ENCODE measurements at regions of chr16 and their contacts with region 1.

Region 1: DNA sequence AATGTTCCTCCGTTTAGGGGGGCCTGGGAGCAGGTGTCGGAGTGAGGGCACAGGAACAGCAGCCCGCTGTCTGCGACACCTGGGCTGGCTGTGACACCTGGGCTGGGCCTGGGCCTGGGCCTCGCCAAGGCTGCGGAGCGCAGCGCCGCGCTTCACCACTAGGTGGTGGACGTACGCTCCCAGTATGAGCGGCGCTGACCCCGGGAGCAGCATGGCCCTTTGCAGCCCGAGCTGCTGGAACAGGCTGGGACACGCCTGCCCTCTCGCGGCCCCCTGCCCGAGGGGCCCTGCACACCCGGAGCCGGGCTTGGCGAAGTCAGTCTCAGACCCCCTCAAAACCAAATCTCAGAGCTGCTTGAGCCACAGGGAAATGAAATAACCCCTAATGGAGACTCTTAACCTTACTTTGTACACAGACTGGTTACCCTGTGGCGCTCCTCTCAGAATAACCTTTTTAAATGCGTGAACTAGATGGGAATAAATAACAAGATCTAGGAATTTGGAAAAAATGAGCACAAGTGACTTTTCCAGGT is 38.6 kb upstream of the FA2H start:
- DNase-seq: no peak
- H3K4me3 ChIP-seq: no peak overlapping the region
- CTCF ChIP-seq: peak; percentile 97

Region 2: GRCh38 chr16:74709441-74709877 is 103.7 kb before region 1 on chr16:
- CTCF ChIA-PET with region 1: interaction called, 19 read pairs
- POLR2A ChIA-PET with region 1: no interaction called
- DNase-seq: no peak
- H3K4me3 ChIP-seq: no peak overlapping the region
- CTCF ChIP-seq: peak; percentile 93

Region 3: DNA sequence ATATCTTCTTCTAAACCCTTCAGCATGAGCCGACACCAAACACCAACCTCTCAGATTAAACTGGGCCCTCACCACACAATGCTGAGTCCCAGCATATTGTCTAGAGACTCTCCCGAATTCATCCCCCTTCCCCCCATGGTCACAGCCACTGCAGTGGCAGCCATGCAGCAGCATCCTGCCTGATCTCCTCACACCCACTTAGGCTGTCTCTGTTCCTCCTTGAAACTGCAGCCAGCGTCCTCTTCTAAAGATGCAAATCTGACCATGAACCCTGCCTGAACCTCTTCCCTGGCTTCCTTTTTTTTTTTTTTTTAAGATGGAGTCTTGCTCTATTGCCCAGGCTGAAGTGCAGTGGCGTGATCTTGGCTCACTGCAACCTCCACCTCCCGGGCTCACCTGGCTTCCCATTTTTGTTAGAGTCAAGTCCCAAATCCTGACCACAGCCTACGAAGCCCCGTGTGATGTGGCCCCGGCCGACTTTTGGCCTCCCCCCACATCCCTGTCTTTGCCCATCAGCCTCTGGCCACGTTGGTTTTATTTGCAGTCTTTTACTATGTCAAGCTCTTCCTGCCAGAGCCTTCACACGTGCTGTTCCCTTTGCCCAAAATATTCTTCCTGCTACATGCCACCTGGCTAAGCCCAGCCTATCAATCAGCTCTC is 41.4 kb before region 1 on chr16:
- CTCF ChIA-PET with region 1: no interaction called
- POLR2A ChIA-PET with region 1: no interaction called
- DNase-seq: no peak
- H3K4me3 ChIP-seq: no peak overlapping the region
- CTCF ChIP-seq: no peak

Region 4: DNA sequence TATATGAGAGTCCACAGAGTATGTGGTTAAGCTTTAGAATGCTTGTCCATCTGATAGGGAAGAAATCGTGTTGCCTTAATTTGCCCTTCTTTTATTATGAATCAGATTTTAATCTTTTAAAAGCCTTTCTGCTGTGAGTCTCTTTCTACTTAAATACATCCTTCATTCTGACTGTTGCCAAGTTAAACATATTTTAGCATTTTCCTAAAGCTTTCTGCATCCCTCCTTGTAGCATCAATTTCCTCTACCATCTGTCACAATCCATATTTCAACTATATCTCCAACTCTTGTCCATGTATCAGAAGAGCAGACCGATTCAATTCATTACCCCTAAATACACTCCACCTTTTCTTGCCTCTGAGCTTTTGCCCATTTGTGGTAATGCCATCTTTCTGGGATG is 18.1 kb before region 1 on chr16:
- CTCF ChIA-PET with region 1: interaction called, 23 read pairs
- POLR2A ChIA-PET with region 1: no interaction called
- DNase-seq: no peak
- H3K4me3 ChIP-seq: no peak overlapping the region
- CTCF ChIP-seq: no peak

Region 5: DNA sequence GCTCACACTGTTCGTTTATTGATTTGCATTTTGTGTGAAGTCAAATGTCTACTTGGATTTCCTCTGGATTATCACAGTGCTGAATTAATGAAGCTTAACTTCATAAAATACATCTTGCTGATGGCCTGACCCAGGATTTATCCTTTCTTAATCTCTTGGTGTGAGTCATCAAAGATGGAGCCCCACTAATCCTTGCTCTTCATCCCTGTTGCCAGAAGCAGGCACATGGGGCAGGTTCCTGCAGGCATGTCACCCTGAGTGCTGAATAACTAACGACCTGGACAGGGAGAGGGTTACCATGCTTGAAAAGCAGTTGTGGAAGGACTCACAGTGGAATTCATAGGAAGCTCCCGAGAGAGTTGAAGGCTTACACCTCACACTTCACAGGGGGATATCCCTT is 17.5 kb after region 1 on chr16:
- CTCF ChIA-PET with region 1: interaction called, 14 read pairs
- POLR2A ChIA-PET with region 1: no interaction called
- DNase-seq: no peak
- H3K4me3 ChIP-seq: no peak overlapping the region
- CTCF ChIP-seq: no peak

Region 6: GRCh38 chr16:74931445-74931844 is 118.3 kb after region 1 on chr16:
- CTCF ChIA-PET with region 1: no interaction called
- POLR2A ChIA-PET with region 1: no interaction called
- DNase-seq: no peak
- H3K4me3 ChIP-seq: no peak overlapping the region
- CTCF ChIP-seq: no peak

Measured in AG04449 (cell line).